ENCODE measurements at regions of chr6 and their contacts with region 1.

Region 1: DNA sequence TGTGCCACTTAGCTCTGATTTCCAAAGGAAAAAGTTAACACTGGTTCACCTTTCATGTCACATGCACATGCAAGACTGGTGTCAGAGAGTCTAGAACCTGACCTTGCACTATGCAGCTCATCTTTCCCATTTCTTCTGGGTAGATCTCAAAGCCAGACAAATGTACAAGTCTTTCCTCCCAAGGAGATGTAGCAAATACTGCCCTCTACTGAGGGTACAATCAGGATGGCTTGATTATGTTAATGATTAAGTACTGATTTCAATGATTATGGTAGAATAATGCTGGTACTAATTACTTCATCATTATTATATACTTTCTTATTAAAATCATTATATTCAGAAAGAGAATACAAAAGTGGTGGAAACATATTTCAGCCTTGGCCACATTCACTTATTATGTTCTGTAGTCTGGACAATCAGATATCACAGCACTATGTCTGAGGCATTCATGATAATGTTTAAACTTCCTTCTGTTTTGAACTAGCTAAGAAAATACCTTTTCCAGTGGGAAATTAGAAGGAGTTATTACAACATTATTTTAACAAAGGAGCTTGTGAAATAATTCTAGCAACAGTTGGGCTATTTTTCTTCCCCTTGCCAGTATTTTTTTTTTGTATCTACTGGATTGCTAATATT is 68.5 kb upstream of the FOXO3 start:
- DNase-seq: no peak
- ATAC-seq: peak in 1 of 4 donors; percentile 49
- H3K4me3 ChIP-seq: no peak overlapping the region
- H3K27ac ChIP-seq: no peak overlapping the region
- H3K4me1 ChIP-seq: peaks cover 0 to 4% (median 0%) of the 10 kb centered on the region in 12 donors
- H3K27me3 ChIP-seq: no peaks in the 10 kb centered on the region
- CTCF ChIP-seq: peak; percentile 28 to 78 (median 60)
- POLR2A ChIP-seq: no peak

Region 2: DNA sequence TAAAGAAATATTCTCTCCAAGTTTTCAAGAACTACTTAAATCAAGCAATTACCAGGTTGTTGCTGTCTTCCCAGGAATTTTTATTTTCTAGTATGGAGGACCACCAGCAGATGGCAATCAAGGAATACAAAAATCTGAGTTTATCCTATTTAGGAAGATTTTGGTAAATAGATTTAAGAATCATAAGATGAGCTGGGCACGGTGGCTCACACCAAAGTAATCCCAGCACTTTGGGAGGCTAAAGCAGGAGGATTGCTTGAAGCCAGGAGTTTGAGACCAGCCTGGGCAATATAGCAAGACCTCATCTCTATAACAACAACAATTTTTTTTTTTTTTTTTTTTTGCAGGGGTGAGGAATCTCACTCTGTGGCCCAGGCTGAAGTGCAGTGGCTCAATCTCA is 515.0 kb before region 1 on chr6:
- intact Hi-C with region 1: loop called in 3 of 10 experiments (anchors 10 kb)
- DNase-seq: no peak
- ATAC-seq: no peak
- H3K4me3 ChIP-seq: no peak overlapping the region
- H3K27ac ChIP-seq: no peak overlapping the region
- H3K4me1 ChIP-seq: no peaks in the 10 kb centered on the region
- H3K27me3 ChIP-seq: no peaks in the 10 kb centered on the region
- CTCF ChIP-seq: peak in 11 of 12 donors; percentile 12 to 55 (median 38)
- POLR2A ChIP-seq: no peak

Region 3: GRCh38 chr6:107989166-107990094 is 502.8 kb before region 1 on chr6:
- intact Hi-C with region 1: loop called in 1 of 10 experiments (anchors 10 kb)
- DNase-seq: no peak
- ATAC-seq: no peak
- H3K4me3 ChIP-seq: no peak overlapping the region
- H3K27ac ChIP-seq: no peak overlapping the region
- H3K4me1 ChIP-seq: no peaks in the 10 kb centered on the region
- H3K27me3 ChIP-seq: no peaks in the 10 kb centered on the region
- CTCF ChIP-seq: no peak
- POLR2A ChIP-seq: no peak

Region 4: GRCh38 chr6:108113557-108114519 is 378.4 kb before region 1 on chr6:
- intact Hi-C with region 1: loop called (anchors 2 to 10 kb)
- DNase-seq: peak in 2 of 5 donors; percentile 21 to 67
- ATAC-seq: peak; percentile 19 to 48 (median 30)
- H3K4me3 ChIP-seq: peak overlapping the region in 9 of 12 donors; percentile 7 to 57 (median 20)
- H3K27ac ChIP-seq: no peak overlapping the region
- H3K4me1 ChIP-seq: peaks cover 0 to 47% (median 34%) of the 10 kb centered on the region in 12 donors
- H3K27me3 ChIP-seq: peaks cover 28 to 93% (median 61%) of the 10 kb centered on the region in 9 donors
- CTCF ChIP-seq: peak in 11 of 12 donors; percentile 24 to 63 (median 46)
- POLR2A ChIP-seq: no peak

Region 5: GRCh38 chr6:108250240-108250866 is 241.9 kb before region 1 on chr6:
- intact Hi-C with region 1: loop called in 1 of 10 experiments (anchors 10 kb)
- DNase-seq: no peak
- ATAC-seq: no peak
- H3K4me3 ChIP-seq: no peak overlapping the region
- H3K27ac ChIP-seq: no peak overlapping the region
- H3K4me1 ChIP-seq: peaks cover 0 to 66% (median 32%) of the 10 kb centered on the region in 12 donors
- H3K27me3 ChIP-seq: no peaks in the 10 kb centered on the region
- CTCF ChIP-seq: no peak
- POLR2A ChIP-seq: no peak

Region 6: GRCh38 chr6:108260809-108261569 is 231.3 kb before region 1 on chr6 and contains the start of gene SNX3:
- intact Hi-C with region 1: loop called in 2 of 10 experiments (anchors 10 kb)
- DNase-seq: peak; percentile 94 to 98 (median 97)
- ATAC-seq: peak; percentile 97 to 98 (median 98)
- H3K4me3 ChIP-seq: peak within 1 kb of the TSS; percentile 65 to 100 (median 89)
- H3K27ac ChIP-seq: peak within 1 kb of the TSS; percentile 90 to 100 (median 97)
- H3K4me1 ChIP-seq: peaks cover 0 to 46% (median 31%) of the 10 kb centered on the region in 12 donors
- H3K27me3 ChIP-seq: no peaks in the 10 kb centered on the region
- CTCF ChIP-seq: peak in 3 of 12 donors; percentile 5 to 37 (median 11)
- POLR2A ChIP-seq: peak in 1 of 2 donors; percentile 80
- total RNA-seq, gene SNX3: 180 to 259 (median 241) TPM